Activated T-helper 1 cell treated with anti-CD3 and anti-CD28 coated beads, Interleukin-12 subunit alpha, Interleukin-12 subunit beta, Interleukin-2, Interleukin-4 antibody, amounts not matched to agents 30 ng/mL and 10 ng/mL and 1 ng/mL, durations not matched to agents 14 hours and 24 hours and 36 hours (primary cell): ENCODE measurements at regions of chr15 and their contacts with region 1.

Region 1: GRCh38 chr15:90571063-90571541 is 41.4 kb downstream of the CRTC3 start:
- DNase-seq: no peak
- H3K4me3 Mint-ChIP-seq: peak overlapping the region; percentile 38
- H3K27ac Mint-ChIP-seq: peak overlapping the region; percentile 64
- H3K4me1 Mint-ChIP-seq: peaks cover 92% of the 10 kb centered on the region
- H3K27me3 Mint-ChIP-seq: no peaks in the 10 kb centered on the region

Region 2: DNA sequence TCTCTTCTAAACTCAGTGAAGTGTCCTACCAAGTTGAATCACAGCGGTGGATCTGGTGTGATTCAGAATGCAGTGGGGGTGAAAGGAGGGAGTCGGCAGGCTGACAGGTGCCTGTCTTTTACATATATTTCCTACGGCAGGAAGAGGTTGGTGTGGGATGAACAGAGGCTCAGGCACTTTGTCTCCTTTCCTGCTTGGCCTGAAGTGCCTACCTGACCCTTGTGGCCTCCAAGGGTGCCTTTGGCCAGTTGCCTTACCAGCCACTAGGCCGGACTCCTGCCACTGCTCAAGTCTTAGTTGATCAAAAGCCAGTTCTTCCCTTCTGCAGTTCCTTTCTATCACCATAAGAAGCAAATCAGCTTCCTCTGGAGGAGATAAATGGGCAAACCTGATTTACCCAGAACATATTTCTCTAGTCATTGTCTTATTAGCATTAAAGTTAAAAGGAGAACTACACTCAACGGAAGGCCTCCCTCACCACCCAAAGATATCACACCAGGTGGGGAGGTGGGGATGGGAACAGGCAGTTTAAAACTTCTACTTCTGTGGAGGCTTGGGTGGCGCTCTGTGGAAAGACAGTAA is 10.8 kb after region 1 on chr15:
- intact Hi-C with region 1: loop called (anchors 1 kb)
- DNase-seq: no peak
- H3K4me3 Mint-ChIP-seq: peak overlapping the region; percentile 55
- H3K27ac Mint-ChIP-seq: peak overlapping the region; percentile 73
- H3K4me1 Mint-ChIP-seq: peaks cover 60% of the 10 kb centered on the region
- H3K27me3 Mint-ChIP-seq: no peaks in the 10 kb centered on the region